Caco-2 (cell line): ENCODE measurements at regions of chr5 and their contacts with region 1.

Region 1: GRCh38 chr5:168317521-168318147 is 26.2 kb downstream of the WWC1 start:
- DNase-seq: peak; percentile 90 to 95
- H3K4me3 ChIP-seq: no peak overlapping the region
- H3K4me3 Mint-ChIP-seq: peak overlapping the region; percentile 35
- H3K27ac Mint-ChIP-seq: peak overlapping the region; percentile 98
- H3K4me1 ChIP-seq: peaks cover 83% of the 10 kb centered on the region
- H3K4me1 Mint-ChIP-seq: peaks cover 48% of the 10 kb centered on the region
- H3K27me3 ChIP-seq: no peaks in the 10 kb centered on the region
- H3K27me3 Mint-ChIP-seq: no peaks in the 10 kb centered on the region
- CTCF ChIP-seq: no peak

Region 2: GRCh38 chr5:167573370-167574127 is 744.1 kb before region 1 on chr5:
- CTCF ChIA-PET with region 1: no interaction called
- POLR2A ChIA-PET with region 1: no interaction called
- intact Hi-C with region 1: no loop called
- DNase-seq: no peak
- H3K4me3 ChIP-seq: no peak overlapping the region
- H3K4me3 Mint-ChIP-seq: peak overlapping the region; percentile 57
- H3K27ac Mint-ChIP-seq: no peak overlapping the region
- H3K4me1 ChIP-seq: no peaks in the 10 kb centered on the region
- H3K4me1 Mint-ChIP-seq: peaks cover 7% of the 10 kb centered on the region
- H3K27me3 ChIP-seq: no peaks in the 10 kb centered on the region
- H3K27me3 Mint-ChIP-seq: peaks cover 34% of the 10 kb centered on the region
- CTCF ChIP-seq: no peak

Region 3: GRCh38 chr5:168152660-168153059 is 165.0 kb before region 1 on chr5:
- CTCF ChIA-PET with region 1: no interaction called
- POLR2A ChIA-PET with region 1: no interaction called
- intact Hi-C with region 1: no loop called
- DNase-seq: no peak
- H3K4me3 ChIP-seq: no peak overlapping the region
- H3K4me3 Mint-ChIP-seq: no peak overlapping the region
- H3K27ac Mint-ChIP-seq: no peak overlapping the region
- H3K4me1 ChIP-seq: no peaks in the 10 kb centered on the region
- H3K4me1 Mint-ChIP-seq: no peaks in the 10 kb centered on the region
- H3K27me3 ChIP-seq: peaks cover 4% of the 10 kb centered on the region
- H3K27me3 Mint-ChIP-seq: peaks cover 39% of the 10 kb centered on the region
- CTCF ChIP-seq: no peak

Region 4: GRCh38 chr5:168328814-168329213 is 11.2 kb after region 1 on chr5:
- CTCF ChIA-PET with region 1: interaction called, 5 read pairs
- POLR2A ChIA-PET with region 1: interaction called, 18 read pairs
- intact Hi-C with region 1: loop called (anchors 1 kb)
- DNase-seq: peak; percentile 95 to 96
- H3K4me3 ChIP-seq: no peak overlapping the region
- H3K4me3 Mint-ChIP-seq: peak overlapping the region; percentile 57
- H3K27ac Mint-ChIP-seq: peak overlapping the region; percentile 88
- H3K4me1 ChIP-seq: peaks cover 83% of the 10 kb centered on the region
- H3K4me1 Mint-ChIP-seq: peaks cover 78% of the 10 kb centered on the region
- H3K27me3 ChIP-seq: no peaks in the 10 kb centered on the region
- H3K27me3 Mint-ChIP-seq: no peaks in the 10 kb centered on the region
- CTCF ChIP-seq: no peak

Region 5: GRCh38 chr5:168346441-168346840 is 28.8 kb after region 1 on chr5:
- CTCF ChIA-PET with region 1: no interaction called
- POLR2A ChIA-PET with region 1: no interaction called
- intact Hi-C with region 1: loop called (anchors 1 kb)
- DNase-seq: peak; percentile 79 to 80
- H3K4me3 ChIP-seq: no peak overlapping the region
- H3K4me3 Mint-ChIP-seq: peak overlapping the region; percentile 71
- H3K27ac Mint-ChIP-seq: peak overlapping the region; percentile 92
- H3K4me1 ChIP-seq: peaks cover 81% of the 10 kb centered on the region
- H3K4me1 Mint-ChIP-seq: peaks cover 74% of the 10 kb centered on the region
- H3K27me3 ChIP-seq: no peaks in the 10 kb centered on the region
- H3K27me3 Mint-ChIP-seq: no peaks in the 10 kb centered on the region
- CTCF ChIP-seq: no peak

Region 6: GRCh38 chr5:168359832-168360460 is 42.3 kb after region 1 on chr5:
- CTCF ChIA-PET with region 1: interaction called, 9 read pairs
- POLR2A ChIA-PET with region 1: interaction called, 5 read pairs
- intact Hi-C with region 1: loop called (anchors 1 kb)
- DNase-seq: peak; percentile 83 to 87
- H3K4me3 ChIP-seq: no peak overlapping the region
- H3K4me3 Mint-ChIP-seq: peak overlapping the region; percentile 29
- H3K27ac Mint-ChIP-seq: peak overlapping the region; percentile 78
- H3K4me1 ChIP-seq: peaks cover 73% of the 10 kb centered on the region
- H3K4me1 Mint-ChIP-seq: peaks cover 72% of the 10 kb centered on the region
- H3K27me3 ChIP-seq: no peaks in the 10 kb centered on the region
- H3K27me3 Mint-ChIP-seq: no peaks in the 10 kb centered on the region
- CTCF ChIP-seq: no peak

Region 7: DNA sequence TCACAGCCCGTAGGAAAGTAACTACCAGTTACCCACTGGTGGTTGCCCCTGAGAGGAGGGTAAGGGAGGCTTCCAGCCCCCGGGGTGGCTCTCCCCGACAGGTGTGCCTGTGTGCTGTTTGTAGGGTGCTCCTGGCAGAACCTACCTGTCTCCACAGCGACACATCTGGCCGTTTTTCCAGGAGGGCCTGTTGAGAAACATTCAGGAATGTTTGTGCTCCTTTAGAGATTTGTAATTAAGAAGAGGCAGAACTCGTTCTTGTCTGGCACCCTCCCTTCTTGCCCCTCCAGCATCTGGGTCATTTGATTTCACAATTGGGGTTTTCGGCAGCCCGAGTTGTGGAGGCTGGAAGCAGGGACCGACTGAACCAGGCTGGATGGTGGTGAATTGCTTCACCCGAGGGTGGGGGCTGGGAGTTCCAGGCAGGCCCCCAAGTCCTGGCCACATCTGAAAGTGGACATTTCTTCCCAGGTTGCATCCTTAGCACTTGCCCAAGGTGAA is 48.0 kb after region 1 on chr5:
- CTCF ChIA-PET with region 1: interaction called, 3 read pairs
- POLR2A ChIA-PET with region 1: interaction called, 5 read pairs
- intact Hi-C with region 1: loop called (anchors 1 kb)
- DNase-seq: peak; percentile 86 to 90
- H3K4me3 ChIP-seq: no peak overlapping the region
- H3K4me3 Mint-ChIP-seq: peak overlapping the region; percentile 63
- H3K27ac Mint-ChIP-seq: peak overlapping the region; percentile 97
- H3K4me1 ChIP-seq: peaks cover 61% of the 10 kb centered on the region
- H3K4me1 Mint-ChIP-seq: peaks cover 55% of the 10 kb centered on the region
- H3K27me3 ChIP-seq: no peaks in the 10 kb centered on the region
- H3K27me3 Mint-ChIP-seq: no peaks in the 10 kb centered on the region
- CTCF ChIP-seq: peak; percentile 46 to 84

Region 8: GRCh38 chr5:168422431-168422830 is 104.8 kb after region 1 on chr5:
- CTCF ChIA-PET with region 1: no interaction called
- POLR2A ChIA-PET with region 1: no interaction called
- intact Hi-C with region 1: no loop called
- DNase-seq: peak in 1 of 2 experiments; percentile 32
- H3K4me3 ChIP-seq: no peak overlapping the region
- H3K4me3 Mint-ChIP-seq: no peak overlapping the region
- H3K27ac Mint-ChIP-seq: no peak overlapping the region
- H3K4me1 ChIP-seq: peaks cover 10% of the 10 kb centered on the region; the same call in 1 of the 2 replicates
- H3K4me1 Mint-ChIP-seq: peaks cover 20% of the 10 kb centered on the region
- H3K27me3 ChIP-seq: no peaks in the 10 kb centered on the region
- H3K27me3 Mint-ChIP-seq: no peaks in the 10 kb centered on the region
- CTCF ChIP-seq: peak in 1 of 2 experiments; percentile 34

Region 9: GRCh38 chr5:168931638-168932345 is 614.2 kb after region 1 on chr5:
- CTCF ChIA-PET with region 1: no interaction called
- POLR2A ChIA-PET with region 1: no interaction called
- intact Hi-C with region 1: no loop called
- DNase-seq: no peak
- H3K4me3 ChIP-seq: no peak overlapping the region
- H3K4me3 Mint-ChIP-seq: no peak overlapping the region
- H3K27ac Mint-ChIP-seq: no peak overlapping the region
- H3K4me1 ChIP-seq: no peaks in the 10 kb centered on the region
- H3K4me1 Mint-ChIP-seq: no peaks in the 10 kb centered on the region
- H3K27me3 ChIP-seq: no peaks in the 10 kb centered on the region
- H3K27me3 Mint-ChIP-seq: peaks cover 9% of the 10 kb centered on the region
- CTCF ChIP-seq: no peak